A673 (cell line): ENCODE measurements at regions of chr16 and their contacts with region 1.

Region 1: GRCh38 chr16:28164140-28164539 is 47.6 kb downstream of the XPO6 start:
- DNase-seq: peak; percentile 56
- H3K4me3 ChIP-seq: no peak overlapping the region
- H3K27ac ChIP-seq: peak overlapping the region; percentile 93
- H3K4me1 ChIP-seq: peaks cover 53% of the 10 kb centered on the region
- H3K27me3 ChIP-seq: no peaks in the 10 kb centered on the region
- CTCF ChIP-seq: no peak

Region 2: GRCh38 chr16:28175715-28176114 is 11.6 kb after region 1 on chr16:
- CTCF ChIA-PET with region 1: no interaction called
- POLR2A ChIA-PET with region 1: interaction called, 21 read pairs
- intact Hi-C with region 1: no loop called
- DNase-seq: no peak
- H3K4me3 ChIP-seq: no peak overlapping the region
- H3K27ac ChIP-seq: no peak overlapping the region
- H3K4me1 ChIP-seq: peaks cover under 1% of the 10 kb centered on the region
- H3K27me3 ChIP-seq: no peaks in the 10 kb centered on the region
- CTCF ChIP-seq: no peak